Posterior vena cava (tissue), 2 donors: ENCODE measurements at regions of chrX and their contacts with region 1.

Region 1: GRCh38 chrX:8783100-8784098 is 17.8 kb downstream of the FAM9A start:
- DNase-seq: no peak

Region 2: GRCh38 chrX:6885909-6886308 is 1897.5 kb before region 1 on chrX:
- intact Hi-C with region 1: loop called in 1 of 2 experiments (anchors 5 kb)
- DNase-seq: no peak

Region 3: GRCh38 chrX:8760021-8760420 is 23.4 kb before region 1 on chrX:
- intact Hi-C with region 1: loop called in 1 of 2 experiments (anchors 1 kb)
- DNase-seq: no peak